Colonic mucosa (tissue), 4 donors: ENCODE measurements at regions of chr5 and their contacts with region 1.

Region 1: DNA sequence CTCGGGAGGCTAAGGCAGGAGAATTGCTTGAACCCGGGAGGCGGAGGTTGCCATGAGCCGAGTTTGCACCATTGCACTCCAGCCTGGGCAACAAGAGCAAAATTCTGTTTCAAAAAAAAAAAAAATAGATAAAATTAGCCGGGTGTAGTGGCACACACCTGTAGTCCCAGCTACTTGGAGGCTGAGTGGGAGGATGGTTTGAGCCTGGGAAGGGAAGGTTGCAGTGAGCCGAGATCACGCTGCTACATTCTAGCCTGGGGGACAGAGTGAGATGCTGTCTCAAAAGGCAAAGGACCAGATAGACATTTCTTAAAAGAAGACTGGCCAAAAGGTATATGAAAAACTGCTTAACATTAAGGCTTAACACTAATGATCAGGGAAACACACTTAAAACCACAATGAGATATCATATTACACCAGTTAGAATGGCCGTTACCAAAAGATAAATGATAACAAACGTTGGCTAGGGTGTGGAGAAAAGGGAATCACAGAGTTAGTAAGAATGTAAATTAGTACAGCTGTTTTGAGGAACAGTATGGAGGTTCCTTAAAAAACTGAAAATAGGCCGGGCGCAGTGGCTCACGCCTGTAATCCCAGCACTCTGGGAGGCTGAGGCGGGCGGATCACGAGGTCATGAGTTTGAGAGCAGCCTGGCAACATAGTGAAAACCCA is 10.1 kb upstream of the MARVELD2 start:
- DNase-seq: no peak
- H3K4me3 ChIP-seq: no peak overlapping the region
- H3K27ac ChIP-seq: no peak overlapping the region
- H3K4me1 ChIP-seq: no peaks in the 10 kb centered on the region
- H3K27me3 ChIP-seq: no peaks in the 10 kb centered on the region
- CTCF ChIP-seq: no peak

Region 2: DNA sequence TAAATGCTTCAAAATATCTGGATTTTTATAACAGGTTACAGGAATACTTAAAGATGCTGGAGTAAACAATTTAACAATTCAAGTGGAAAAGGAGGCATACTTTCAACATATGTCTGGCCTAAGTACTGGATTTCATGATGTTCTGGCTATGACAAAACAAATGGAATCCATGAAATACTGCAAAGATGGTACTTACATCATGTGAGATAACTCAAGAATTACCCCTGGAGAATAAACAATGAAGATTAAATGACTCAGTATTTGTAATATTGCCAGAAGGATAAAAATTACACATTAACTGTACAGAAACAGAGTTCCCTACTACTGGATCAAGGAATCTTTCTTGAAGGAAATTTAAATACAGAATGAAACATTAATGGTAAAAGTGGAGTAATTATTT is 275.4 kb before region 1 on chr5:
- intact Hi-C with region 1: loop called (anchors 10 kb)
- DNase-seq: no peak
- H3K4me3 ChIP-seq: no peak overlapping the region
- H3K27ac ChIP-seq: no peak overlapping the region
- H3K4me1 ChIP-seq: no peaks in the 10 kb centered on the region
- H3K27me3 ChIP-seq: no peaks in the 10 kb centered on the region
- CTCF ChIP-seq: no peak

Region 3: GRCh38 chr5:69502767-69503488 is 98.1 kb after region 1 on chr5:
- intact Hi-C with region 1: no loop called
- DNase-seq: no peak
- H3K4me3 ChIP-seq: no peak overlapping the region
- H3K27ac ChIP-seq: peak overlapping the region; percentile 40
- H3K4me1 ChIP-seq: peaks cover 5% of the 10 kb centered on the region
- H3K27me3 ChIP-seq: no peaks in the 10 kb centered on the region
- CTCF ChIP-seq: no peak

Region 4: GRCh38 chr5:69528048-69528447 is 123.3 kb after region 1 on chr5:
- intact Hi-C with region 1: no loop called
- DNase-seq: no peak
- H3K4me3 ChIP-seq: no peak overlapping the region
- H3K27ac ChIP-seq: no peak overlapping the region
- H3K4me1 ChIP-seq: peaks cover 16% of the 10 kb centered on the region
- H3K27me3 ChIP-seq: no peaks in the 10 kb centered on the region
- CTCF ChIP-seq: no peak